ENCODE measurements at regions of chr1 and their contacts with region 1.

Region 1: GRCh38 chr1:27388337-27389005 is 4.0 kb upstream of the GPR3 start:
- DNase-seq: peak in 1 of 2 experiments; percentile 81
- H3K4me3 ChIP-seq: no peak overlapping the region
- H3K4me1 ChIP-seq: peaks cover 8% of the 10 kb centered on the region
- H3K27me3 ChIP-seq: no peaks in the 10 kb centered on the region

Region 2: DNA sequence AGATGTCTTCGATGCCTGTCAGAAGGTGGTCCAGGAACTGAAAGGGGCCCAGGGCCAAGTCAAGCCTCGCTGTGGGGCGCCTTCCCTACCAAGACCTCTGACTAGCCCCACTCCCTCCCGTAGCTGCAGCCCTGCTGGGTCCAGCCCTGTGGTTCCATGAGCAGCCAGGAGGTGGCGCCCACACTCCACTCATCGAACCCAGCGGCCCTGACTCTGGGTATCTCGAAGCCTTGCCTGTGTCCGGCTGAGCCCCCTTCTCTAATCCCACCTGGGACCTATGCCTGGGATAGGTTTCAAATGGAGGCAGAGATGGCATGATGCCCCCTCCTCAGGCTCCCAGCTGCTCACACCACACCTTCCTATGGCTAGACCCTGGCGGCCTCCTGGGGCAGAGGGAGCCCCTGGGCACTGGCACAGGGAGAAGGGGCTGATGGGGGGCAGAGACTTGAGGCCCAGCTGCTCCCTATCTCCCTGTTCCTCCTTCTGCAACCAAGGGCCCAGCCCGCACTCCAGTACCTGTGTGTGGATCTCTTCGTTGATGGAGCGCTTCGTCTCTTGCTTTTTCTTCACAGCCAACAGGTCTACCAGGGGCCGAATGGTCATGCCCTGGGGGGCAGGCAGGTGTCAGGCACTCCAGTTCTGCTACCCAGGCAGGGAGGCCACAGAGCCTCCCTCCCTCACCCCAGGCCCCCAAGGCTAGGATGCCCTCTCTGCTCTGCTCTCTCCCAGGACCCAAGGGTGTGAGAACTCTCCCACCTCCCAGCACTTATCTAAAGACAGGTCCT is 285.6 kb before region 1 on chr1:
- in situ Hi-C with region 1: loop called (anchors 10 kb)
- DNase-seq: peak; percentile 39 to 88
- H3K4me3 ChIP-seq: no peak overlapping the region
- H3K4me1 ChIP-seq: peaks cover 10% of the 10 kb centered on the region
- H3K27me3 ChIP-seq: no peaks in the 10 kb centered on the region

Region 3: DNA sequence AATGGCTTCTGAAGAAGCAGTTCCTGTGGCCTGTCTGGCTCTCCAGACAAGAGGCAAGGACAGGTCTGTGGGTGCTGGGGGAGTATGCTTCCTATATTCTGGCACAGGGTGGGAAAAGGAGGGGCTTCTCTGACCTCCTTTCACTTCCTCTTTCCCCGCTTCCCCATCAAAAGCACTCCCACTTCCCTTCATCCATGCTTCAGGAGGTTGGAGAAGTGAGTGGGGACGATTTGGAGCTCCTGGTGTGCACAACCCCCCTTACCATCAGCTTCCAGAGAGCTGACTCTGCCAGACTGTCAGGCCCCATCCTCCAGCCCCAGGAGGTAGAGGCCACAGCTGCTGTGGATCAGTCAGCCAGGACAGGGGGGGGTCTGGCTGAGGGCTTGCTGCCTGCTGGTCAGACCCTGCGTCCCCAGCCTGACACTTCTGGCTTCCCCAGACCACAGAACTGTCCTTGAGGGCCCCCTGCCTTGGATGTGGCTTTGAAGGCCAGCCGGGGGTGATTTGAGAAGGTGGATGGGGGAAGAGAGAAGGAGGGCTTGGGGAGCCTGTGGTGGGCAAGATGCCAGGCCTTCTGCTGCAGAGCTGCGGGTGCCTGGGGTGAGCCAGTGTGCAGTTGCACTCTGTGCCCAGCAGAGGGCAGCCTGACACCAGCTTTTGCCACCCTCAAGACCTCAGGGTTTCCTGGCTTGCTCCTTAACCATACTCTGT is 88.0 kb before region 1 on chr1:
- in situ Hi-C with region 1: loop called (anchors 5 kb)
- DNase-seq: peak; percentile 77 to 85
- H3K4me3 ChIP-seq: no peak overlapping the region
- H3K4me1 ChIP-seq: no peaks in the 10 kb centered on the region
- H3K27me3 ChIP-seq: no peaks in the 10 kb centered on the region

Measured in HAP-1 (cell line).